Activated T-helper 1 cell treated with anti-CD3 and anti-CD28 coated beads, Interleukin-12 subunit alpha, Interleukin-12 subunit beta, Interleukin-2, Interleukin-4 antibody, amounts not matched to agents 30 ng/mL and 10 ng/mL and 1 ng/mL, durations not matched to agents 14 hours and 24 hours and 36 hours (primary cell): ENCODE measurements at regions of chr3 and their contacts with region 1.

Region 1: DNA sequence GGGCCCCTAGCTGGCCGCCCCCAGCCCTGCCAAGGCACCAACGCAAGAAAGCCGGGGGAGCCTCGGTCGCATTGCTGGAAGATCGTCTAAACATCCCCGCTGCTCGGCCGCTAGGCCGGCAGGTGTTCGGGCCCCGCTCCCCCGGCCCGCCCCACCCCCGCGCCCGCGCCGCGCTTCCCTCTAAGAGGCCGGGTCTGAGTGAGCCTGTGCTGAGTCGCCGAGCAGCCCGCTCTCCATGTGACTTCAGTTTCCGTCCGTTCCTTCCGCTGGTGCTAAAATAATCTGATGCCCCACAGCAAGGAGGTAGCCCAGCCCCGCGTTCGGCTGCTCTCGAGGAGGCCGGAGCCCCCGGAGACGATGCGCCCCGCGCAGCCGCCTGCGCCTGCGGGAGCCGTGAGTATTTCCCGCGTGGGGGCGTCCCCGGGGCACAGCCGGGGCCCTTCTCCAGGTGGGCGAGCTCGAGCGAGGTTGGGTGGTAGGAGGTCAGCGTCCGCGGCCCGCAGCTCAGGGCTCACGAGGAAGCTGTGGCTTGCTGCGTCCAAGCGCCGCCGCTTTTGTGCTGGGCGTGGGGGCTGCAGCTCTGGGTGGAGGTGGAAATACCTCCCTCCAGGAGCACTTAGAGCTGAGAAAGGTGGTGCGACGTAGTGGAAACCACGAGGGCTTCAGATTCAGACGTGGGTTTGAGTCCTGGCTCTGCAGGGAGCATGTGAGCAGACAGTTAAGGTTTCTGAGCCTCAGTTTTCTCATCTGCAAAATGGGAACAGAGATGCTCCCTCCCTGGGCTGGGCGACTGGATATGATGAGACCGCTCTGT is at the start of gene NRROS:
- DNase-seq: peak; percentile 61
- H3K4me3 Mint-ChIP-seq: peak within 1 kb of the TSS; percentile 94
- H3K27ac Mint-ChIP-seq: peak within 1 kb of the TSS; percentile 94
- H3K4me1 Mint-ChIP-seq: peaks cover 75% of the 10 kb centered on the region
- H3K27me3 Mint-ChIP-seq: no peaks in the 10 kb centered on the region
- total RNA-seq, gene NRROS: 37.8 and 38.8 TPM in 2 replicates

Region 2: GRCh38 chr3:196624067-196624790 is 15.5 kb before region 1 on chr3:
- intact Hi-C with region 1: loop called (anchors 1 kb)
- DNase-seq: no peak
- H3K4me3 Mint-ChIP-seq: peak overlapping the region; percentile 47
- H3K27ac Mint-ChIP-seq: peak overlapping the region; percentile 63
- H3K4me1 Mint-ChIP-seq: peaks cover 27% of the 10 kb centered on the region
- H3K27me3 Mint-ChIP-seq: no peaks in the 10 kb centered on the region

Region 3: DNA sequence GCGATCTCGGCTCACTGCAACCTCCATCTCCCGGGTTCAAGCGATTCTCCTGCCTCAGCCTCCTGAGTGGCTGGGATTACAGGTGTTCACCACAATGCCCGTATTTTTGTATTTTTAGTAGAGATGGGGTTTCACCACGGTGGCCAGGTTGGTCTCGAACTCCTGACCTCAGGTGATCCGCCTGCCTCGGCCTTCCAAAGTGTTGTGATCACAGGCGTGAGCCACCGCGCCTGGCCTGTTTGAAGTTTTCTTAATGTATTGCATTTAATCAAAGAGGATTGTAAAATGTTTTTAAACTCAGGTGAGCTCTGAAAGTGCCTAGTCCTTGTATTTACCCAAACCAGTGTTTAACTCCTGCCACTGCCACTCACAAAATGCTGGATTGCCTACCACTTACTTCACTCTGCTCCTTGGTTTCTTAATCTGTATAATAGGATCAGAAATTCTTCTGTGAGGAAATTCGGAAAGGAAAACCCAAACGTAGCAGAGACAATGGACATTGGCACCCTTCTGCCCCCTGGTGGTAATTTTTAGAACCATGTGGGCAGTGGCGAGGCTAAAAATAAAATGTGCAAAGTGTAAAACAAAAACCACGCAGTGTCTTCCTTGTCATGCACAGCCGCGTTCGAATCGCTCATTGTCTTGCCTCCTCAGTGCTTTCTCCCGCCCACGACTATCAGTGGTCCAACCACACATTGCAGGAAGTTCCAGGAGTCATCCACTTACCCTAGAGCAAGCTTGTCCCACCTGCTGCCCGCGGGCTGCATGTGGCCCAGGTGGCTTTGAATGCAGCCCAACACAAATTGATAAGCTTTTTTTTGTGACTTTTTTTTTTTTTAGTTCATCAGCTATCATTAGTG is 45.1 kb after region 1 on chr3:
- intact Hi-C with region 1: loop called (anchors 1 kb)
- DNase-seq: peak; percentile 47
- H3K4me3 Mint-ChIP-seq: peak overlapping the region; percentile 1
- H3K27ac Mint-ChIP-seq: peak overlapping the region; percentile 9
- H3K4me1 Mint-ChIP-seq: peaks cover 29% of the 10 kb centered on the region
- H3K27me3 Mint-ChIP-seq: peaks cover 2% of the 10 kb centered on the region